Activated naive CD4-positive, alpha-beta T cell treated with anti-CD3 and anti-CD28 coated beads for 36 hours (primary cell): ENCODE measurements at regions of chr20 and their contacts with region 1.

Region 1: GRCh38 chr20:1503564-1504227 is 12.5 kb upstream of the SIRPB2 start:
- DNase-seq: peak; percentile 91
- H3K4me3 Mint-ChIP-seq: no peak overlapping the region
- H3K27ac Mint-ChIP-seq: no peak overlapping the region
- H3K4me1 Mint-ChIP-seq: peaks cover 6% of the 10 kb centered on the region
- H3K27me3 Mint-ChIP-seq: peaks cover 9% of the 10 kb centered on the region

Region 2: GRCh38 chr20:1437235-1437904 is 66.3 kb before region 1 on chr20:
- CTCF ChIA-PET with region 1: interaction called, 12 read pairs
- intact Hi-C with region 1: loop called (anchors 1 kb)
- DNase-seq: peak; percentile 91
- H3K4me3 Mint-ChIP-seq: no peak overlapping the region
- H3K27ac Mint-ChIP-seq: no peak overlapping the region
- H3K4me1 Mint-ChIP-seq: peaks cover 30% of the 10 kb centered on the region
- H3K27me3 Mint-ChIP-seq: no peaks in the 10 kb centered on the region

Region 3: DNA sequence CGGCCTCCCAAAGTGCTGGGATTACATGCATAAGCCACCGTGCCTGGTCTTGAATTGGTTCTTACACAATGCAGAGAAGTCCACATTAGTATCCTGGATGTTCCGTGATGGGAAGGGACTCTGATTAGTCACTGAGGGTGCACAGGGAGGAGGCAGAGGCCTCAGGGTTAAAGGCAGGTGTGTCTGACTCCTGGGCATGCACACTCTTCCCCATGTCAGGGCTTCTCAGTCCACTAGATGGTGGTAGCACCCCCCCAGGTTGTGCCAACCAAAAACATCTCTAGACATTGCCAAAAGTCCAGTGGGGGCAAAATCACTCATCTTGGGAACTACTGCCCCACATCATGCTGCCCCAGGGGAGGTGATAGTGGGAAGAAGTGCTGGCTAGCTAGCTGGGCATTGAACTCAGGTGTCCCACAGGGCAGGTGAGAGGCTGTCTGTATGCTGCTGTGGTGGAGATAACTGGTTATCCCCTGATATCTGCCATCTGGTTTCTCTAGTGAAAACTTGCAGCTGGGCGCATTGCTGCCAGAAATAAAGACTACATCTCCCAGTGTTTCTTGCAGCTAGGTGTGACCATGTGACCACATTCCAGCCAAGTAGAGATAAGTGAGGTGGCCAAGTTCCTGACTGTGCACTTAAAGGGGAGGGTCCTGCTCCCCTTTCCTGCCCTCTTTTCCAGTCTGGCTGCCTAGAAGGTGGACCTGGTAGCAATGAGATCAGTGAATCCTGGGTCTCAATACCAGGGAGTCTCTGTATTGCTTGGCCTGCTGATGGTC is 28.7 kb before region 1 on chr20:
- CTCF ChIA-PET with region 1: interaction called, 38 read pairs
- intact Hi-C with region 1: loop called (anchors 1 kb)
- DNase-seq: peak; percentile 27
- H3K4me3 Mint-ChIP-seq: no peak overlapping the region
- H3K27ac Mint-ChIP-seq: no peak overlapping the region
- H3K4me1 Mint-ChIP-seq: no peaks in the 10 kb centered on the region
- H3K27me3 Mint-ChIP-seq: no peaks in the 10 kb centered on the region

Region 4: GRCh38 chr20:1524004-1524403 is 20.3 kb after region 1 on chr20:
- CTCF ChIA-PET with region 1: interaction called, 11 read pairs
- intact Hi-C with region 1: no loop called
- DNase-seq: no peak
- H3K4me3 Mint-ChIP-seq: no peak overlapping the region
- H3K27ac Mint-ChIP-seq: no peak overlapping the region
- H3K4me1 Mint-ChIP-seq: peaks cover 3% of the 10 kb centered on the region
- H3K27me3 Mint-ChIP-seq: peaks cover 2% of the 10 kb centered on the region

Region 5: DNA sequence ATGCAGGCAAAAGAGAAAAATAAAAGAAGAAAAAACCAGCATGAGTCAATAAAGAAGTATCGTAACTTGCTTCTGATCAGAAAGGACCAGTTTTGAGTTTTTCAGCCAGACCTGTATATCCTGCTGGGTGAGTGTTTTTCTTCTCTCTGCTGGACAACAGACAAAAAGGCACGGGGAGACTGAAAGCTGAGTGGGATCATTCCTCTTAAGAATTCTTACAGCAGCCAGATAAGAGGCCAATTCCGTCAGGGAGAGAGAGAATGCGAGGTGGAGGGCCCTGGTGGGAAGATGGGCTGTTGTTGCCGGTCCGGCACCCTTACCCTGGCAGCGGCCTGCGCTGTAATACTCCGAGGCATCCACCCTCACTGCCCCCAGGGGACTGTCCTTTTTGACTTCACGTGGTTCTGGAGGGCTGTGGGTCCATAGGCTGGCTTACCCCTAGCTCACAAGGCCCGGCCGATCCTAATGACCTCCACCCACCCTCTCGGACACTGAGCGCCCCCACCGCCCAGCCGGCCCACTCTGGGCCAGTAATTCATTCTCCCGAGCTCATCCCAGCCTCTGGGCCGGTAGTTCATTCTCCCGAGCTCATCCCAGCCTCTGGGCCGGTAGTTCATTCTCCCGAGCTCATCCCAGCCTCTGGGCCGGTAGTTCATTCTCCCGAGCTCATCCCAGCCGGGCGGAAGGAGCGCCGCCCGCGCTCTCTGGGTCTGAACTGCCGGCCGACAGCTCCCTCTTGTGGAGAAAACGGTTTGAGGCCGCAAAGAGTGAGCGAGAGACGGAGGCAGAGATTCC is 273.2 kb after region 1 on chr20:
- CTCF ChIA-PET with region 1: interaction called, 42 read pairs
- intact Hi-C with region 1: loop called (anchors 2 kb)
- DNase-seq: peak; percentile 90
- H3K4me3 Mint-ChIP-seq: peak overlapping the region; percentile 79
- H3K27ac Mint-ChIP-seq: no peak overlapping the region
- H3K4me1 Mint-ChIP-seq: peaks cover 15% of the 10 kb centered on the region
- H3K27me3 Mint-ChIP-seq: peaks cover 4% of the 10 kb centered on the region